Dorsolateral prefrontal cortex (tissue), 120 donors: ENCODE measurements at regions of chr3 and their contacts with region 1.

Region 1: DNA sequence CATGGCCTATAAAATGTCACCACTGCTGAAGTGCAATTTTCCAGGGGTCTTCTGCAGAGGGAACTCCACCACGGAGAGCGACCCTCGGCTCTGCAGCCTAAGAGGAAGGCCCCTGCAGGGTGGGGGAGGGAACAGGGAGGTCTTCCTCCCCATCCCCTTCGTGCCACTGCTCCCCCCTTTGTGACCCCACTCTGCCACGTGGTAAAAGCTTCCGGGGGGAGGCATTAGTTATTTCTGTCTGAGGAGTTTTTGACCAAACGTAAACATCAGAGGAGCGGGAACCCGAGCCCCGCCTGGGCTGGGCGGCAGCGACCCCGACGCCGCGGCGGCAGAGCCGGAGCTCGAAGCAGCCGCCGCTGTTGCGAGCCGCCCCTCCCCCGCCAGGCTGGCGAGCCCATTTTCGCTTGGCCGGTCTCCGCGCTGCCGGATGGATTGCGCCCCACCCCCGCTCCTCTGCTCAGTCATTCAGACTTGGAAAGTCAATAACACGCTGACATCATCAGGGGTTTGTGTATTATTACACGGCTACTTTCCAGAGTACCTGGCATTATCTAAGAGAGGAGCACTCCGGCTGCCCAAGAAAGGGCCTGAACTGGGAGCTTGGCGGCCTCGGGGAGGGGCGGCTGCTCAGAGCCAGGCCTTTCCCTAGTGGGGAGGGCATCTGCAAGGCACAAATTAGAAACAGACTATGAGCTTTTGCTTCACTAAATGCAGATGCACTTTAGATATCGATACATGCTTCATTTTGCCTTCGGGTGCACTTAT is 162.5 kb upstream of the TBL1XR1 start:
- DNase-seq: peak; percentile 84 to 96 (median 92)
- H3K4me3 ChIP-seq: peak overlapping the region; percentile 35 to 75 (median 56)
- H3K27ac ChIP-seq: peak overlapping the region; percentile 65 to 97 (median 93)
- H3K27me3 ChIP-seq: no peaks in the 10 kb centered on the region
- CTCF ChIP-seq: peak in 32 of 56 donors; percentile 2 to 48 (median 26)

Region 2: DNA sequence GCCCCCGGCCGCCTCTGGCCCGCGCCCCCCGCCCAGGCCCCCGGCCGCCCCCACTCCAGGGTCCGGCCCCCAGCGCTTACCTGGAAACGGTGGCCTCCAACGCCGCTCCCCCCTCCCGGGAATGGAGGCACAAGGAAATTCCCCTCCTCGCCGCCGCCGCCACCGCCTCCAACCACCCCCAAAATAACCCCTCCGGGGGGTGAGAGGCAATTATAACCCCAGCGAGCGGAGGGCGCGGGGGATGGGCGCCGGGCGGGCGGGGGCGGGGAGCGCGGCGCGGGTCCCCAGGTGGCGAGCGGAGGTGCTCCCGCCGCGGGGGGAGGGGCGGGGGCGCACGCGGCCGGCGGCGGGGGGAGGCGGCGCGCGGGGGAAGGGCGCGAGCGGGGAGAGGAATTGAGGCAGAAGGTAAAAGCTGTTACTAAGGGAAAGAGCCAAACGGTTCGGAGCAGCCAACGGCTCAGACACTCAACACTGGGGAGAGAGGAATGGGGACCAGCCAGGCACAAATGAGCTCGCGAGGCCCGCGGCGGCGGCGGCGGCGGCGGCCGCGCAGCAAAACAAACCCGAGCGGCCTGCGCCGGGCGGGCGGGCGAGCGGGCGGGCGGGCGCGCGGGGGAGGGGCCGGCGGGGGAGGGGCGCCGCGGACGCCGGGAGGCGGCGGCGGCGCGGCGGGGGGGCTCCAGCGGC is 162.6 kb before region 1 on chr3 and contains the start of gene TBL1XR1:
- intact Hi-C with region 1: loop called (anchors 1 kb)
- DNase-seq: peak; percentile 84 to 94 (median 92)
- H3K4me3 ChIP-seq: peak within 1 kb of the TSS; percentile 60 to 87 (median 77)
- H3K27ac ChIP-seq: peak within 1 kb of the TSS; percentile 71 to 99 (median 95)
- H3K27me3 ChIP-seq: no peaks in the 10 kb centered on the region
- CTCF ChIP-seq: peak in 1 of 56 donors; percentile 12
- total RNA-seq, gene TBL1XR1: 104 to 240 (median 165) TPM

Region 3: DNA sequence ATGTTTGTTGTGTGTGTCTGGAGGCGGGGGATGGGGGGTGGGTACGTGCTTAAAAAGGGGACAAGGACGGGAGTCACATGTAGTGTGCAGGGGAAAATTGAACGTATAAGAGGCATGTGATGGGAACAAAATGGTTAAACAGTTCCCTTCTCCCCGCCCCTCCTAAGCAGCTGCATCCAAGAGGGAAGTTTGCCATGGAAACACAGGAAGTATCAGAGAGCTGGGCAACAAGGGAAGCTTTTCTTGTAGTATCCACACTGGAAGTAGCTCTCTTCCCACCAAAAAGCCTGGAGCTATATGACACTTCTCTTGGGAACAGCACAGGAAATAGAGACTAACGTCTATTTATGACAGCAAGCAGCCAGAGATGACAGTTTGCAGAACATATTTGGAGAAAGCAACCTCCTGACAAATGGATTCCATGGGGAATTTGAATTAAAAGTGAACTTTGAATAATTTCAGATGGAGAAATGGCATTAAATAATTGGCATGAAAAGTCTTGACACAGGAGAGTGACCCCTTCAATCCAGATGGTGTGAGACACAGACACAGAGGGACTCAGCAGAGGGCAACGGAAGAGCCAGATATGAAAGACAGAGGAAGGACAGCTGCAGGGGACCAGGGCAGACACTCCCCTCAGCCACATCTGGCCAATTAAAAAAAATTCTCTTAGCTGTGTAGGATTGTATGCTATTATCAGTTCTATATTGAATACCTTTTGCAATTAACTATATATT is 131.7 kb after region 1 on chr3:
- intact Hi-C with region 1: loop called (anchors 1 to 2 kb)
- DNase-seq: peak in 2 of 10 donors; percentile 57 to 70
- H3K4me3 ChIP-seq: peak overlapping the region in 50 of 59 donors; percentile 2 to 55 (median 27)
- H3K27ac ChIP-seq: peak overlapping the region; percentile 22 to 99 (median 92)
- H3K27me3 ChIP-seq: no peaks in the 10 kb centered on the region
- CTCF ChIP-seq: peak in 2 of 56 donors; percentile 12

Region 4: GRCh38 chr3:177615015-177615414 is 255.2 kb after region 1 on chr3:
- intact Hi-C with region 1: loop called in 1 of 2 experiments (anchors 10 kb)
- DNase-seq: no peak
- H3K4me3 ChIP-seq: no peak overlapping the region
- H3K27ac ChIP-seq: peak overlapping the region in 1 of 59 donors; percentile 4
- H3K27me3 ChIP-seq: no peaks in the 10 kb centered on the region
- CTCF ChIP-seq: no peak

Region 5: DNA sequence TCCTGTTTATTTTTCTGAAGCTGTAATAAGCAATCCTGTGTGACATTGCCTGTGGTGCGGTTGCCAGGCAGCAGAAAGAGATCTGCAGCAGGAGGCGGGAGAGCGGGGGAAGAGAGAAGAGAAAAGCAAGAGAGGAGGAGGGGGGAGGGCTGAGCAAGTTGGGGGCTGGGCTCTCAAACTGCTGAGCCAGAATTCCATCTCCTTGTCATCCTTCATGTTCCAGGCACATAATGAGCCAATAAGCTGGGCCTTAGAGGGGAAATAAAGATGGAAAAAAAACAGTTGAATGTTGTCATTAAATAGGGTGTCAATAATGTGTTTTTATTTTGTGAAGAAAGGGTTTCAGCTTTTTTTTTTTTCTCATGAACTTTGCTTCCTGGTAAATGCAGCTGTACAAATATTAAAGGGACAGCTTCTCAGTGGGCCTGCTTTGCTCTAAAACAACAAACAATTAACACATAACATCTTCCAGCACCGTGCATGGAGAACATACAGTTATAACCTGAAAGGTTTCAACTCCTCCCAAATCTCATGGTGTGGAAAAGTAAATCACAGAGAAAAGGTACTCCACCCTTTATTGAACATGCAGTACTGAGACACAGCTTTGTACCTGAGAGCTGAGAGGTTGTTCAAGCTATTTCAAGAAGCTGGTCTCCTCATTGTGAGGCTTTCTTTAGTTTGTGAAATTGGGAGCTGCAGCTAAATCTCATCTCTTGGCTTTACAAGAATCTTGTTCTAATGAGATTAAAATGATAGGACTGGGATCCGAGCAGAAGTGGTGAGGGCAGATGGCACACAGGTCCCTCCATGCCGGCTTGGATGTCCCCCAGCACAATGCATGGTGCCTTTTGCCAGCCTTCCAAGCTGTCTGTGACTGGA is 725.4 kb after region 1 on chr3:
- intact Hi-C with region 1: loop called in 1 of 2 experiments (anchors 10 kb)
- DNase-seq: peak; percentile 70 to 90 (median 88)
- H3K4me3 ChIP-seq: peak overlapping the region in 29 of 59 donors; percentile 2 to 49 (median 22)
- H3K27ac ChIP-seq: peak overlapping the region; percentile 63 to 97 (median 92)
- H3K27me3 ChIP-seq: no peaks in the 10 kb centered on the region
- CTCF ChIP-seq: peak in 1 of 56 donors; percentile 10